Common myeloid progenitor, CD34-positive (primary cell): ENCODE measurements at regions of chr4 and their contacts with region 1.

Region 1: DNA sequence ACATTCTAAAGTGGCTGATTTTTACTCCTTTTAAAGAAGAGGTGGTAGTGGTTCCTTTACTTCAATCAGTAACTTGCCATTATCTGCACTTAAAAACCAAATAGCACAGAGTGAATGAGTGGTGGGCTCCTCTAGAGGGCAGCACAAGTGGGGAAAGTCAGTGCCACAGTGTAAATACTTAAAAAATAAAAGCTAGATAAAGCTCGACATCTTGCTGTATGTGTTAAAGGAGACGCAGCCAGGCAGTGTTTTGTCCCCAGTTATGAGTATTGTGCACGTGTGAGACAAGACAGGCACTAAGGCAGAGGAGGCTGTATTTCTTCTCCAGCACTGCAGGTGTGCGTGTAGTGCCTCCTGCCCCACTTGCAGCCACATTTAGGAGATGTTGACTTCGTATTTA is 24.6 kb downstream of the NAP1L5 start:
- DNase-seq: peak; percentile 52 to 78 (median 73)
- H3K4me3 ChIP-seq: no peak overlapping the region
- H3K27ac ChIP-seq: no peak overlapping the region
- H3K4me1 ChIP-seq: no peaks in the 10 kb centered on the region
- H3K27me3 ChIP-seq: no peaks in the 10 kb centered on the region

Region 2: GRCh38 chr4:88690355-88690754 is 17.4 kb after region 1 on chr4:
- CTCF ChIA-PET with region 1: interaction called, 10 read pairs
- POLR2A ChIA-PET with region 1: interaction called, 3 read pairs
- DNase-seq: peak in 2 of 3 donors; percentile 28 to 44
- H3K4me3 ChIP-seq: no peak overlapping the region
- H3K27ac ChIP-seq: no peak overlapping the region
- H3K4me1 ChIP-seq: peaks cover 0 to 8% (median 0%) of the 10 kb centered on the region in 4 experiments
- H3K27me3 ChIP-seq: no peaks in the 10 kb centered on the region

Region 3: DNA sequence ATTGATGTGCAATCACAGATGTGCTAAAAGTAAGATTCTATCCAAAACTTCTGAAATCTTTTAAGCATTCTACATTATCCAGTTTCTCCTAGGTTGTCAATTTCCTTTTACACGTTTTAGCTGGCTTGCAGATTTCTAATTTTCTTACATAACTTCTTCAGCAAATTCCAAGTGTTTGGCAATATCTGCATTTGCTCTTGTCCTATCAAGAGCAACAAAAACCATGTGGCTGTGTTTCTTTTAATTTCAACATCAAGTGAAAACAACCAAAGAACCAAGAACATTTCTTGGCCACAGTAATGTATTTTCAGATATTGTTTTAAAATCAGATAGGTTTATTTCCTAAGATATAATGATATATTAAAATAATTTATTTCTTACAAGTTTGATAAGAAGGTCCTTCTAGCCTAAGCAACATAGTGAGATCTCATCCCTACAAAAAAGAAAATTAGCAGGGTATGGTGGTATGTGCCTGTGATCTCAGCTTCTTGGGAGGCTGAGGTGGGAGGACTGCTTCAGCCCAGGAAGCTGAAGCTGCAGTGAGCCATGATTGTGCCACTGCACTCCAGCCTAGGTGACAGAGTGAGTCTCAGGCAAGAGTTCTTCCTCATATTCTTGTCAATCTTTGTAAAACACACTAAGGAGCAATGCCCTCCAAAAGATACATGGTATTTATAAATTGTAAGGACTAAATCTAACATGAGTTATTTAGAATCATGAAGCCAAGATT is 156.0 kb after region 1 on chr4:
- CTCF ChIA-PET with region 1: no interaction called
- POLR2A ChIA-PET with region 1: no interaction called
- DNase-seq: no peak
- H3K4me3 ChIP-seq: no peak overlapping the region
- H3K27ac ChIP-seq: no peak overlapping the region
- H3K4me1 ChIP-seq: peaks cover 7 to 23% (median 16%) of the 10 kb centered on the region in 4 experiments
- H3K27me3 ChIP-seq: no peaks in the 10 kb centered on the region

Region 4: DNA sequence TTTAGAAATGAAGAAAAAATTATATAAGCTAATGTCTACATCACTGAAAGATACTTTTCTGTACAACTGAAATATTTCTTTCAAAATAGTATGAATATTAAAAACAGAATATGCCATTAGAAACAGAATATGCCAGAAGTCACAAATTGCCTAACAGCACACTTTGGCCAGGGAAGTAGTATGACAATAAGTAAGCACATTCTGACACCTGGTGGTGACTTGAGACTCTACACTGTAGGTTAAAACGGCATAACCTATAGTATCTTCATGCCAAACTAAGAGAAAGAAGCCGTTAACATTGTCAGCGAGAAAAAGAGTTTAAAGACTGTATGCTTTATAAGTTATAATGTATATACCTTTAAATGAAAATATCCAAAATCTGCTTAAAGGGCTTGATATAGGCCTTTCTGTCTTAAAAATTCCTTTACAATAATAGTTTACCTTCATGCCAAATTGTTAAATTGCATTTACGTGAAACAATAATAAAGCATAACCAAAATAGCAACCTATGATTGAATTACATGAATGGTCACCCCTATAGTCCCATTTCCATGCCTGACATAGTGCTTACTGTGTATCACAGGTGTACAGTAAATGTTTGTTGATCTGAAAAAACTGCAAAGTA is 351.2 kb after region 1 on chr4:
- CTCF ChIA-PET with region 1: interaction called, 10 read pairs
- POLR2A ChIA-PET with region 1: no interaction called
- DNase-seq: peak; percentile 78 to 88 (median 84)
- H3K4me3 ChIP-seq: peak overlapping the region in 1 of 7 experiments; percentile 19
- H3K27ac ChIP-seq: no peak overlapping the region
- H3K4me1 ChIP-seq: no peaks in the 10 kb centered on the region
- H3K27me3 ChIP-seq: no peaks in the 10 kb centered on the region

Region 5: GRCh38 chr4:89404531-89404930 is 731.5 kb after region 1 on chr4:
- CTCF ChIA-PET with region 1: no interaction called
- POLR2A ChIA-PET with region 1: no interaction called
- DNase-seq: no peak
- H3K4me3 ChIP-seq: no peak overlapping the region
- H3K27ac ChIP-seq: no peak overlapping the region
- H3K4me1 ChIP-seq: peaks cover 0 to 3% (median 2%) of the 10 kb centered on the region in 4 experiments
- H3K27me3 ChIP-seq: no peaks in the 10 kb centered on the region